ENCODE measurements at regions of chr5 and their contacts with region 1.

Region 1: DNA sequence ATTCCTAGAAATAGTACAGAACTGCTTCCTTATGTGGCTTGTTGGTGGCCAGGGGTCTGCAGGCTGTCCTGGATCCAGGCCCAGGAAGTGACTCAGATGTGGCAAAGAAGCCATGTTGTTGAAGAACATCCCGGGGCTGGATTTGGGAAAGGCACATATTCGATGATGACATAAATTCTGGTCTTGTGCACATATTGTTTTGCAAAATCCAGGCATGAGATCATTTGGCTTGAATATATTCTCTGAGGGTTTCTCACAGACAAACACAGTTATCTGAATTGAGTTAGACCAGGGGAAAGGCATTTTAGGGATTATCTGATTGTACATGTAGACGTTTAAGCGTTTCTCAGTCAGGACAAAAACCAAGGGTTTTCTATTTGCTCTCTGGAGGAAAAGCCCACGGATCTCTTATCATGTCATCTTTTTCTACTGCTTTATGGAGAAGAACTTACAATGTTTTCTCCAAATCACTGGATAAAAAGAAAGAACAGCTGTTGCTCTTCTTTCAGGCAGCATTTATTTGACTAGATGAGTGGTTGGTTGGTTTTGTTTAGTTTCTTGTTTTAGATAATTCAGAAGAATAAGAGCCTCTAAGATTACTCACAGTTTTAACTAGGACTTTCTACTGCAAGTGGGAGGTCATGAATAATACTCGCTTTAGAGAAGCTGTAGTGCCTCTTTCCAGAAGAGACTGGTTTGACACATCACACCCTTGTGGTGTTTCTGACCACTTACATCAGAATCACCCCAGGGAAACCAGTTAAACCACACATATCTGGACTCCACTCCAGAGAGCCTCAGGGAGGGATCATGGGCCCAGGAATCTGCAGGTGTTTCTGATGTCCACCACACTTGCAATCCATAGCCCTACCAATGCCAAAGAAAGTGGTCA is 29.5 kb upstream of the LHFPL2 start:
- DNase-seq: no peak
- ATAC-seq: no peak
- H3K4me3 Mint-ChIP-seq: no peak overlapping the region
- H3K27ac Mint-ChIP-seq: no peak overlapping the region
- H3K4me1 Mint-ChIP-seq: no peaks in the 10 kb centered on the region
- H3K27me3 Mint-ChIP-seq: no peaks in the 10 kb centered on the region
- CTCF ChIP-seq: no peak

Region 2: DNA sequence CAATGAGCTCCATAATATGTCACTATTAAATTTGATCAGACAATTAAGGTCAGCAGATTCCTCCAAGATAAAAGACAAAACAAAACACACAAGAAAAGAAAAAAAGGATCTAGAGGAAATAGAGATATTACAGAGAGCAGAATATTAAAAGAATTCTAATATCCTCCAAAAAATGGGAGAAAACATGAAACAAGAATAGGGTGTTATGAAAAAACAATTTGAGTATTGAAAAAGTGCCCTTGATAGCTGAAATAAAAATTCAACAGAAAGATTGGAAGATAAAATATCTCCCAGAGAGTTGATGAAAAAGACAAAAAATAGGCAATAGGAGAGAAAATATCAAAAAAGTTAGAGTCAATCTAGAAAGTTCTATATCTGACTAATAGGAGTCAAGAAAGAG is 15.3 kb after region 1 on chr5:
- CTCF ChIA-PET with region 1: no interaction called
- POLR2A ChIA-PET with region 1: no interaction called
- intact Hi-C with region 1: loop called (anchors 2 kb)
- DNase-seq: no peak
- ATAC-seq: no peak
- H3K4me3 Mint-ChIP-seq: no peak overlapping the region
- H3K27ac Mint-ChIP-seq: no peak overlapping the region
- H3K4me1 Mint-ChIP-seq: peaks cover 6% of the 10 kb centered on the region
- H3K27me3 Mint-ChIP-seq: no peaks in the 10 kb centered on the region
- CTCF ChIP-seq: no peak

Region 3: DNA sequence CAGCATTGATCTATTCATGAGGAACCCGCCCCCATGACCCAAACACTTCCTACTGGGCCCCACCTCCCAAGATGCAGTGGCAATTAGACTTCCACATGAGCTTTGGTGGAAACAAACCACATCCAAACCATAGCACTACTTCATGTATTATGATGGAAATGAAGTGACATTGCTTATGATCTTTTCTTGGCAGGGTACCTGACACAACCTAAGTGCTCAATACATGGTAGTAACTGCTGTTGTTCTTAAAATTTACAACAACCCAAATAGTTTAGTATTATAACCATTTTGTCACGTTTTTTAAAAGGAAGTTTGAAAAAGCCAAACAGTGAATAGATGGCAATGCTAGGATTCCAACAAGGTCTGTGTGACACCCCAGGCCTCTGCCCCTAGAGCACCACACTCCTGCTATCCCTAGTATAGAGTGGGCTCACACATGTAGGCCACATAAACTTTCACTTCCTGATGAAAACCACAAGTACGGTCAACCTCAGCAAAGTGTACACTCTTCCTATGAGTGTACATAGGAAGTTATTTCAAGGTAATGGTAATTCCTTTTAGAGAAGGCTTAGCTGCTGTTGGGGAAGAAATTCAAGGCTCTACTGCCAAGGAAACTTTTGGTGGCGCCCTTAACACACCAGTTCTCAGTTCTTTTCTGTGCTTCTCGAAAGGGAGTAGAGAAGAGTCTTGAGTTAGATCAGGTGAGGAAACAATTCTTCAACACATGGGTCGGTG is 209.5 kb after region 1 on chr5:
- CTCF ChIA-PET with region 1: no interaction called
- POLR2A ChIA-PET with region 1: no interaction called
- intact Hi-C with region 1: no loop called
- DNase-seq: no peak
- ATAC-seq: peak; percentile 98
- H3K4me3 Mint-ChIP-seq: peak overlapping the region; percentile 17
- H3K27ac Mint-ChIP-seq: peak overlapping the region; percentile 43
- H3K4me1 Mint-ChIP-seq: peaks cover 39% of the 10 kb centered on the region
- H3K27me3 Mint-ChIP-seq: no peaks in the 10 kb centered on the region
- CTCF ChIP-seq: no peak